Activated CD4-positive, alpha-beta T cell treated with anti-CD3 and anti-CD28 coated beads for 36 hours (primary cell): ENCODE measurements at regions of chr13 and their contacts with region 1.

Region 1: DNA sequence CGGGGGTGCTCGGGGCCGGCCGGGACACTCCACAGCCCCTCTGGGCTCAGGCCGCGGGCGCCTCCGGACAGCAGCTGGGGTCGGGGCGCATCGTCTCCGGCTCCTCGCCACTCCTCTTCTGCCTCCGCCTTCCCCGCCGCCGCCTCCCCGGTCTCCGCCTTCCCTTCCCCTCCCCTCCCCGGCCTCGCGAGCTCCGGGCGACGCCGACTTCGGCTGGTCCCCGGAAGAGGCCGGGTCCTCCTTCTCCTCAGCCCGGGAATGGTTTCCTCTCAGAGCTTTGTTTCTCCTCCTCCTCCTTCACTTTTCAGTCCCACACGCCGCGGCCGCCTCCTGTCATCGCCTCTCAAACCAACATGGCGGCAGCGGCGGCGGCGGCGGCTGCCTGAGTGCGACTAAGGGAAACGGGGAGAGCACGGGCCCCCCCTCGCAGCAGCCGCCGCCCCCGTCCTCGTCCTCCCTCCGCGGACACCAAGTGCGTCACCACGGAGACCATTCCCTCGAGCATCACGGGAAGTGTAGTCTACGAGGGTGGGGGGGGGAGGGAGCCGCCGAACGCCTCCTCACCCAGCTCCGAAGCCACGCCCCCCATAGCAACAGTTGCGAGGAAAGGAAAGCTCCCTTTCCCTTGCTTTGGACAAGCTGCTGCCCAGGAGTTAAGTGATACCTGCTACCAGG is at the start of gene UBL3:
- DNase-seq: peak; percentile 98
- ATAC-seq: peak; percentile 86
- H3K4me3 Mint-ChIP-seq: peak within 1 kb of the TSS; percentile 90
- H3K27ac Mint-ChIP-seq: peak within 1 kb of the TSS; percentile 98
- H3K4me1 Mint-ChIP-seq: peaks cover 42% of the 10 kb centered on the region
- H3K27me3 Mint-ChIP-seq: no peaks in the 10 kb centered on the region
- total RNA-seq, gene UBL3: 9.1 to 10.7 TPM

Region 2: GRCh38 chr13:29595380-29596063 is 254.8 kb before region 1 on chr13 and contains the start of gene SLC7A1:
- CTCF ChIA-PET with region 1: no interaction called
- POLR2A ChIA-PET with region 1: no interaction called
- intact Hi-C with region 1: loop called (anchors 1 to 5 kb)
- DNase-seq: peak; percentile 92
- ATAC-seq: peak; percentile 88
- H3K4me3 Mint-ChIP-seq: peak within 1 kb of the TSS; percentile 90
- H3K27ac Mint-ChIP-seq: peak within 1 kb of the TSS; percentile 95
- H3K4me1 Mint-ChIP-seq: peaks cover 36% of the 10 kb centered on the region
- H3K27me3 Mint-ChIP-seq: no peaks in the 10 kb centered on the region
- total RNA-seq, gene SLC7A1: 91.1 to 126 TPM

Region 3: DNA sequence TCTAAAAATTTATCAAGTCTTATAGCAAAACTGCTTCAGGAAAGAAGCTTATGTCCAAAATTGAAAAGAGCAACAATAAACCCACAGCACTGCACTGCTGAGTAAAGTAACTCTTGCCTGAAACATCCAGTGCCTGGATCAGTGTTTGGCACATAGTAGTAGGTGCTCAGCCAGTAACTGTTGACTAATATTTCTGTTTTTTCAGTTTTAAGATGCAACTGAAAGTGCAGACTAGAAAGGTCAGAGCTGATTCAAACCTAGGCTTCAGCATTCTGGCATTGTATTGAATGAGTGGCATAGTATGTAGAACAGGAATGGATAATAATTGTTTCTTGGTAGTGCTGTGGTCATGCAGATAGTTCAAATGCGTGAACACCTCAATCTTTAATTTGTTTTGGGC is 67.6 kb before region 1 on chr13:
- CTCF ChIA-PET with region 1: interaction called, 3 read pairs
- POLR2A ChIA-PET with region 1: no interaction called
- intact Hi-C with region 1: loop called (anchors 2 kb)
- DNase-seq: peak; percentile 36
- ATAC-seq: peak; percentile 98
- H3K4me3 Mint-ChIP-seq: no peak overlapping the region
- H3K27ac Mint-ChIP-seq: peak overlapping the region; percentile 53
- H3K4me1 Mint-ChIP-seq: peaks cover 32% of the 10 kb centered on the region
- H3K27me3 Mint-ChIP-seq: no peaks in the 10 kb centered on the region

Region 4: DNA sequence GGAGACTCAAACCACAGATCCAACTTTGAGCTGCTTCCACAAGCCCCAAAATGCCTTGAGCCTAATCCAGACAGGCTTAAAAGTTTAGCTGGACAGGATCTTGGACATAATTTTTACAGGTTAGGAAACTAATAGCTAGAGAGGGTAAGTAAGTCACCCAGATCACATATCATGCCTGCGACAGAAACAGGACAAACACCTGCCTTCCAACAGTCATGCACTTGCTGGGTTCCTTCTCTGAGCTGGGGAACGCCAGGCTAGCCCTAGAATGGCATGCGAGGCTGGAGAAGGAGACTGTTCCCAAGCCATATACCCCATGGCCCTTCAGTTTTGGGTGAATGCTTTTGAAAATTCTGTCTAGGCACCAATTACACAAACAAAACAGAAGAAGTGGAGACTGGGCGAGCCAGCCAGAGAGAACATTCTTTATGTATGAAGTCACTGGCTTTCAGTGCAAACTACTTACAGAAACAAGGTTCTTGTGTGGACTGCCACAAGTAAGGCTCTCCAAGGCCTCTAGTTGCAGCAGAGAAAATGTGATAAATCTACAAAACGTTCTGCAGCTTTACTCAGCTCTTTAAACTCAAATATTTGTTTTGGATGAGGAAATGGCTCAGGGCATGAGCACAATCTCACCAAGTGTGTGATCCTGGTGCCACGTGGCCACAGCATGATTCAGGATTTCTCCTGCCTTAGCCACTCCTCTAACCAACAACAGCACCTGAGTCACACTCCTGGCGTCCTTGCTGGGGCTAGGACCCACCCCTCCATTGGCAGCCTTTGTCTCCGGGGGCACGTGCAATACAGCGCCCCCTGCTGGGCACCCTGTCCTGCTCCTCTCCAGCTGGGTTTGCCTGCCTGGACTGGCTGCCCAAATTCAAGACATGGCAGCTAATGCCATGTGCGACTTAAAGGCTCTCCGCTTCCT is 73.5 kb after region 1 on chr13:
- CTCF ChIA-PET with region 1: interaction called, 19 read pairs
- POLR2A ChIA-PET with region 1: no interaction called
- intact Hi-C with region 1: loop called (anchors 1 kb)
- DNase-seq: peak; percentile 88
- ATAC-seq: peak; percentile 97
- H3K4me3 Mint-ChIP-seq: no peak overlapping the region
- H3K27ac Mint-ChIP-seq: no peak overlapping the region
- H3K4me1 Mint-ChIP-seq: peaks cover 41% of the 10 kb centered on the region
- H3K27me3 Mint-ChIP-seq: no peaks in the 10 kb centered on the region

Region 5: GRCh38 chr13:30114571-30115256 is 264.4 kb after region 1 on chr13:
- CTCF ChIA-PET with region 1: interaction called, 9 read pairs
- POLR2A ChIA-PET with region 1: interaction called, 3 read pairs
- intact Hi-C with region 1: loop called (anchors 1 to 2 kb)
- DNase-seq: peak; percentile 96
- ATAC-seq: peak; percentile 92
- H3K4me3 Mint-ChIP-seq: peak overlapping the region; percentile 70
- H3K27ac Mint-ChIP-seq: peak overlapping the region; percentile 68
- H3K4me1 Mint-ChIP-seq: peaks cover 33% of the 10 kb centered on the region
- H3K27me3 Mint-ChIP-seq: no peaks in the 10 kb centered on the region

Region 6: DNA sequence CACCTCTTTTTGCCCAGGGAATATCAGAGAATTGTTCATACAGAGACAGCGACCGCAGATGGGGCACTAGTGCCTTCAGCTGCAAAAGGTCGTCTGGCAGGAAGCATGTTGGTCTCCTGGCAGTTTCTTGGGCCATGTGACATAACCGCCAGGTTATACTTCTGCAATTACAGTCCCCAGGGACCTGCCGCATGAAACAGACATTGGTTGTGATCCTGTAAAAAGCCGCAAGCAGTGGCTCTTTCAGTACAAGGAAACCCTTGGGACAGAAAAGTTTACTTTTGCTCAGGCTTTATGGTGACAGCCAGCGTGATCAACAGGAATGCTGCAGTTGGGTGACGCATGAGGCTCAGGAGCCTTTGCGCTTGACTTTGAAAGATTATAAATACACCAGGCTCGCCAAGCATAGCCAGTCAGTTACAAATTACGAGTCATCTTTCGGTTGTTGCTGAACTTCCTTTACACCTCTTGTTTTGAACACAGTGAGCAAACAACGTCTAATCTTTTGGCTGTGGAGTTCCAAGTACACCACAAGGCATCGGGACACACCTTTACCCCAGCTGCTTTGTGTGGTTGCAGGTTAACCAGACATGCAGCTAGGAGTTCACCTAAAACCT is 521.4 kb after region 1 on chr13:
- CTCF ChIA-PET with region 1: no interaction called
- POLR2A ChIA-PET with region 1: no interaction called
- intact Hi-C with region 1: loop called in 1 of 2 experiments (anchors 5 kb)
- DNase-seq: peak; percentile 81
- ATAC-seq: peak; percentile 67
- H3K4me3 Mint-ChIP-seq: peak overlapping the region; percentile 59
- H3K27ac Mint-ChIP-seq: peak overlapping the region; percentile 69
- H3K4me1 Mint-ChIP-seq: peaks cover 75% of the 10 kb centered on the region
- H3K27me3 Mint-ChIP-seq: no peaks in the 10 kb centered on the region